ENCODE measurements at regions of chr6 and their contacts with region 1.

Region 1: DNA sequence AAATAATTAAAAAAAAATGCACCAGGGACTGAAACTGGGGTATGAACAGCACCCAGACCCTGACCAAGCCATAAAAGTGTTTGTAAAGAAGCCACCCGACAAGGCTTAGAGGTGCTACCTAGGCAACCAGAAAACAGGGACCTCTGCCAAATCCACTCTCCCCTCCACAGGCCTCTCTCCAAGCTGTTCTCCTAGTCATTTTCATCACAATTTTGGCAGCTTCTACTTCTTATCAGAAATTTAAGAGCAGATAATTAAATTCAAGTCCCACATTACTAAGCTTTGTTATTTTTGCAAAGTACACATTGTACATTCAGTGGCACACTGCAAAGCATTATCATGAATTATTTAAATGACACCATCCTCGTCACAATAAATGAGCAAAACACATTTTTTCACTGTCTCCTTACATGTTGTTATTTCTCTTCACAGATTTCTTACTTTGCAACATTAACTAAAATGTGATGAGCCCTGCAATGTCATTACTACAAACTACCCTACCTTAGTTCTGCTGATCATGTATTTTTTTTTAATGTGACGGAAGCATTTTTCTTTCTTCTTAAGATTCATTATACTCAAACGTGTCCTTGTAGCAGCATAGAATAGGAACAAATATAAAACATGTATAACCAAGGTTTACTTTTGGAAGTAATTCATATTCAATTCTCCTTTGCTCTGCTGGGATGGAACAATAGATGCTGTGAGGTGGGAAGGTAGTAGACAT is 38.1 kb downstream of the ECT2L start:
- DNase-seq: peak in 4 of 5 donors; percentile 52 to 77 (median 70)
- ATAC-seq: peak; percentile 89 to 94 (median 93)
- H3K4me3 ChIP-seq: peak overlapping the region in 2 of 12 donors; percentile 35 to 43
- H3K27ac ChIP-seq: peak overlapping the region in 11 of 12 donors; percentile 39 to 92 (median 80)
- H3K4me1 ChIP-seq: peaks cover 0 to 17% (median 5%) of the 10 kb centered on the region in 12 donors
- H3K27me3 ChIP-seq: no peaks in the 10 kb centered on the region
- CTCF ChIP-seq: no peak
- POLR2A ChIP-seq: no peak

Region 2: GRCh38 chr6:138682704-138683527 is 151.1 kb before region 1 on chr6:
- intact Hi-C with region 1: no loop called
- DNase-seq: peak in 1 of 5 donors; percentile 27
- ATAC-seq: peak in 2 of 4 donors; percentile 42 to 45
- H3K4me3 ChIP-seq: peak overlapping the region in 2 of 12 donors; percentile 7 to 16
- H3K27ac ChIP-seq: peak overlapping the region in 4 of 12 donors; percentile 23 to 56 (median 32)
- H3K4me1 ChIP-seq: no peaks in the 10 kb centered on the region
- H3K27me3 ChIP-seq: no peaks in the 10 kb centered on the region
- CTCF ChIP-seq: no peak
- POLR2A ChIP-seq: no peak

Region 3: GRCh38 chr6:138856654-138857053 is 22.7 kb after region 1 on chr6:
- intact Hi-C with region 1: no loop called
- DNase-seq: no peak
- ATAC-seq: no peak
- H3K4me3 ChIP-seq: no peak overlapping the region
- H3K27ac ChIP-seq: no peak overlapping the region
- H3K4me1 ChIP-seq: no peaks in the 10 kb centered on the region
- H3K27me3 ChIP-seq: no peaks in the 10 kb centered on the region
- CTCF ChIP-seq: no peak
- POLR2A ChIP-seq: no peak

Region 4: GRCh38 chr6:138869398-138869797 is 35.4 kb after region 1 on chr6:
- intact Hi-C with region 1: loop called in 2 of 10 experiments (anchors 5 kb)
- DNase-seq: peak; percentile 54 to 87 (median 68)
- ATAC-seq: peak; percentile 78 to 95 (median 88)
- H3K4me3 ChIP-seq: no peak overlapping the region
- H3K27ac ChIP-seq: peak overlapping the region; percentile 25 to 89 (median 78)
- H3K4me1 ChIP-seq: peaks cover 0 to 44% (median 14%) of the 10 kb centered on the region in 12 donors
- H3K27me3 ChIP-seq: no peaks in the 10 kb centered on the region
- CTCF ChIP-seq: no peak
- POLR2A ChIP-seq: no peak

Region 5: DNA sequence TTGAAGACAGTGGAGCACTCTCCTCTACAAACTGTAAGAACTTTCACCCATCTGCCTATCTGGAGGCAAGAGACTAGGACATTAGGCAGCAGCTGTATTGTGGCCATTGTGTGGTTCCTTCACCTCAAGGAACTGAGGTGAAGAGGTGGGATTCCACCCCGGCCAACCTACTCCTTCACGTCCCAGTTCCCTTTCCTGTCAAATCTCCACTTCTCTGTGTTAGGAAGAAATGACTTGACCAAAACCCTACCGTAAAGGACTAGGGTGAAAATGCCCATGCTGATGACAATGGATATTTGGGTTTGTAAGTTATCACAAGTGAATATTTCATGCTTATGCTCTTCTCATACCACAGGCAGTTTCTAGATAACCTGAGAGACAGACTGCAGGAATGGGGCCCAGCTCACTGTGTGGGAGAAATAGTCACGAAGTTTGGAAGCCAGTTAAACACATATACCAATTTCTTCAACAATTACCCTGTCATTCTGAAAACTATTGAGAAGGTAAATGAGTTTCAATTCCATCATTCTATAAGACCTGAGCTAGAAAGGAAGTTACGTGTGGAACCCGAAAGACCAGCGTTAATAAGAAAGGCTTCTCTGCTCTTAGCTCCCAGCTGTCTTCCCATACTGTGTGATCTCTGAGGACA is 48.5 kb after region 1 on chr6:
- intact Hi-C with region 1: loop called in 1 of 10 experiments (anchors 5 kb)
- DNase-seq: no peak
- ATAC-seq: peak in 1 of 4 donors; percentile 9
- H3K4me3 ChIP-seq: no peak overlapping the region
- H3K27ac ChIP-seq: no peak overlapping the region
- H3K4me1 ChIP-seq: no peaks in the 10 kb centered on the region
- H3K27me3 ChIP-seq: no peaks in the 10 kb centered on the region
- CTCF ChIP-seq: no peak
- POLR2A ChIP-seq: no peak

Region 6: DNA sequence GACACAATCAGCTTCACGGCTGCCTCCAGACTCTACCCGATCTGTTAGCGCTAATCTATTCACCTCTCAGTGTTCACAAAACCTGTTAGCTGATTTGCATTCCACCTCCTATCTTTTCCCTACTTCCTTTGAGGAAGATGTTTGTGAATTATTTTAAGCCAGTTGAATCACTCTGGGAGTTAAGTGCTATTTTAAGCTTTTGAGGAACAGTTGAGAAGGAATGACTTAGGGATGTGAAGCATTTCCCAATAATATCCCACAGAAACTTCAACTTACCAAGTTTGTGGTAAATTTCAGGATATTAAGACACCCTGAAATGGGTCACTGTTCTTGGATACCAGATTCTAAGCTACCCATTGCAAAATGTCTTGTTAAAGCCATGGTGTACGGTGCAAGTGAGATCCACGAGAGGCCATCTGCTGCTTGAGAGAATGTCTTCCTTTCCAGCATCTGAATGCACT is 685.6 kb after region 1 on chr6:
- intact Hi-C with region 1: no loop called
- DNase-seq: no peak
- ATAC-seq: peak in 1 of 4 donors; percentile 45
- H3K4me3 ChIP-seq: no peak overlapping the region
- H3K27ac ChIP-seq: peak overlapping the region in 1 of 12 donors; percentile 4
- H3K4me1 ChIP-seq: peaks cover 0 to 15% (median 6%) of the 10 kb centered on the region in 12 donors
- H3K27me3 ChIP-seq: no peaks in the 10 kb centered on the region
- CTCF ChIP-seq: no peak
- POLR2A ChIP-seq: no peak